K562 (cell line): ENCODE measurements at regions of chr1 and their contacts with region 1.

Region 1: GRCh38 chr1:244391761-244392160 is 59.9 kb downstream of the ADSS2 start:
- DNase-seq: no peak
- ATAC-seq: no peak
- H3K4me3 ChIP-seq: no peak overlapping the region
- H3K27ac ChIP-seq: no peak overlapping the region
- H3K4me1 ChIP-seq: peaks cover 12 to 17% of the 10 kb centered on the region in 2 experiments; a peak in 4 of 5 replicates
- H3K27me3 ChIP-seq: no peaks in the 10 kb centered on the region
- CTCF ChIP-seq: no peak
- EP300 ChIP-seq: no peak
- POLR2A ChIP-seq: no peak
- RAD21 ChIP-seq: no peak

Region 2: GRCh38 chr1:244150665-244151064 is 241.1 kb before region 1 on chr1:
- CTCF ChIA-PET with region 1: no interaction called
- POLR2A ChIA-PET with region 1: no interaction called
- in situ Hi-C with region 1: no loop called
- intact Hi-C with region 1: no loop called
- DNase-seq: no peak
- ATAC-seq: no peak
- H3K4me3 ChIP-seq: no peak overlapping the region
- H3K27ac ChIP-seq: no peak overlapping the region
- H3K4me1 ChIP-seq: peaks cover 0 to 6% of the 10 kb centered on the region in 2 experiments; a peak in 1 of 5 replicates
- H3K27me3 ChIP-seq: peaks cover 25 to 37% of the 10 kb centered on the region in 2 experiments
- CTCF ChIP-seq: no peak
- EP300 ChIP-seq: no peak
- POLR2A ChIP-seq: no peak
- RAD21 ChIP-seq: no peak

Region 3: DNA sequence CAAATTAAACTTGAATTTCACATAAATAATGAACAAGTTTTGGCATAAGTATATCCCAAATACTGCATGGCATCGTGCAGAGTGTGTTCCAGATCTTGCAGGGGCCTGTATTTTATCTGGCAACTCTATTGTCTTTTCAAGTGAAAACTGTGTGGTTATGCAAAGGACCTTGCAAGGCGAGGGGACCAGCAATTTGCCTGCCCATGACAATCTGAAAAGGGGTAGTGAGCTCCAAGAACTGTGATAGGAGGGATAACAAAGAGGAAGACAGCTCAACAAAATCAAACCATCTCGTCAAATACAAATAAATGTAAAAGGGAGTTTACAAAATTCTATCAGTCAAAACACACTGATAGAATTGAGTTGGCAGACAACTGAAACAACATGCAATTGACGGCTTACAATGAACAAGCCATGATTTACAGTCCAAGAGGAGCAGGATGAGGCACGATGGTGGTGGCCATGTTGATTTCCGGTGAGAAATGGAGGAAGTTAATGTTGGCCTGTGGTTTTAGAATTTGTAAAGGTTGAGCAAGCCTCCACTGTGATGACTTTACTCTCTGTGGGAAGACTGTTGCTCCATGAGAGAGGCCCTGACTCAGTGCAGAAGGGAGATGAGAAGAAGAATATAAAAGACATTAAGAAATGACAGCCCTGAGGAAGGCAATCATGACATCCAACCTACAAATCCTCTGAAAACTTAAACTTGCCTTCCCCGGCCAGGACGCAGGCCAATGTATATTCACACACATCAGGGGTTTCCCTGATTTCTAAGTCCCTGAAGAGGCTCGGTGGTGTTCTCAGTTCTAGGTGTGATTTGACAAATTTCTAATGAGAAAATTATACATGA is 72.3 kb before region 1 on chr1:
- CTCF ChIA-PET with region 1: no interaction called
- POLR2A ChIA-PET with region 1: no interaction called
- in situ Hi-C with region 1: no loop called
- intact Hi-C with region 1: loop called (anchors 5 kb)
- DNase-seq: no peak
- ATAC-seq: no peak
- H3K4me3 ChIP-seq: no peak overlapping the region
- H3K27ac ChIP-seq: peak overlapping the region; percentile 36; the same call in 1 of the 3 replicates
- H3K4me1 ChIP-seq: peaks cover 9 to 37% of the 10 kb centered on the region in 2 experiments
- H3K27me3 ChIP-seq: no peaks in the 10 kb centered on the region
- CTCF ChIP-seq: no peak
- EP300 ChIP-seq: no peak
- POLR2A ChIP-seq: no peak
- RAD21 ChIP-seq: no peak

Region 4: DNA sequence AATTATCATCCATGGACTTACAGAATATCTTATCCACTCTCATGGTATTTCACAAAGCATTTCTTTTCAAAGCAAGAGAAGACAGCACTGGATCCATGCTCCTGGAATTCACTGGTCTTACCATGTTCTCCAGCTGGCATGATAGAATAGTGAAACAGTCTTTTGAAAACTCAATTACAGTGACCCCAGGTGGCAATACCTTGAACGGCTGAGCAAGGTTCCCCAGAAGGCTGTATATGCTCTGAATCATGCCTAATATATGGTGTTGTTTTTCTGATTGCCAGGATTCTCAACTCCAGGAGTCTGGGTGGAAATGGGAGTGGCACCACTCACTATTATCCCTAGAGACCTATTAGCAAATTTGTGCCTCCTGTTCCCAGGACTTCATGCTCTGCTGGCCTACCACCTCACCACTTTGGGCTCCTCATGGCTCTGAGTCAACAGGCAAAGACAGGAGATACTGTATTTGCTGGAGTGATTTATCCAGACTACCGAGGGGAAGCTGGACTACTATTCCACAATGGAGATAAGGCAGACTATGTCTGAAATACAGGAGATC is 156.9 kb after region 1 on chr1:
- CTCF ChIA-PET with region 1: no interaction called
- POLR2A ChIA-PET with region 1: no interaction called
- in situ Hi-C with region 1: no loop called
- intact Hi-C with region 1: loop called (anchors 10 kb)
- DNase-seq: peak in 1 of 4 experiments; percentile 6
- ATAC-seq: peak; percentile 69
- H3K4me3 ChIP-seq: no peak overlapping the region
- H3K27ac ChIP-seq: no peak overlapping the region
- H3K4me1 ChIP-seq: no peaks in the 10 kb centered on the region
- H3K27me3 ChIP-seq: peaks cover 0 to 2% of the 10 kb centered on the region in 2 experiments; a peak in 1 of 5 replicates
- CTCF ChIP-seq: peak in 2 of 3 experiments; percentile 28 to 29; a peak in 1 of 6 replicates
- EP300 ChIP-seq: no peak
- POLR2A ChIP-seq: no peak
- RAD21 ChIP-seq: no peak; a peak in 1 of 4 replicates